ENCODE measurements at regions of chr9 and their contacts with region 1.

Region 1: DNA sequence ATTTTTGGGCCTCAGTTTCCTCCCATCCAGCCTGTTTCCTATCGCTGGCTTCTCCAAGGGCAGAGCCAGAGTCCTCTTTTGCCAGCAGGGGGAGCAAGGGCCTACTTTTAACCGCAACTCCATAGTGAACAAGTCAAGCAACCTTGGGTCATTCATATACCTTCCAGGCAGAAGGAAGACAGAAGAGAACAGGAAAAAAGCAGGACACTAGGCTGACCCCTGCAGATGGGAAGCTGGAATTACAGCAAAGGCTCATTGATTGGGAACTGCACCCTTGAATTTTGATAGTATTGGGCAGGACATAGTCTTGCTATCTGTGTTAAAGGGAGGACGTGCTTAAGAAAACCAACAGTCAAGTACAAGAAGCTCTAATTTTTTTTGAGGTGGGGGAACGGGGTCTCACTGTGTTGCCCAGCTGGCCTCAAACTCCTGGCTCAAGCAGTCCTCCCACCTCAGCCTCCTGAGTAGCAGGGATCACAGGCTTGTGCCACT is 30.1 kb downstream of the QRFP start:
- DNase-seq: peak; percentile 82 to 86
- ATAC-seq: peak; percentile 88

Region 2: GRCh38 chr9:130701056-130702022 is 165.2 kb before region 1 on chr9:
- intact Hi-C with region 1: loop called (anchors 5 to 10 kb)
- DNase-seq: peak; percentile 57 to 87
- ATAC-seq: peak; percentile 94

Region 3: DNA sequence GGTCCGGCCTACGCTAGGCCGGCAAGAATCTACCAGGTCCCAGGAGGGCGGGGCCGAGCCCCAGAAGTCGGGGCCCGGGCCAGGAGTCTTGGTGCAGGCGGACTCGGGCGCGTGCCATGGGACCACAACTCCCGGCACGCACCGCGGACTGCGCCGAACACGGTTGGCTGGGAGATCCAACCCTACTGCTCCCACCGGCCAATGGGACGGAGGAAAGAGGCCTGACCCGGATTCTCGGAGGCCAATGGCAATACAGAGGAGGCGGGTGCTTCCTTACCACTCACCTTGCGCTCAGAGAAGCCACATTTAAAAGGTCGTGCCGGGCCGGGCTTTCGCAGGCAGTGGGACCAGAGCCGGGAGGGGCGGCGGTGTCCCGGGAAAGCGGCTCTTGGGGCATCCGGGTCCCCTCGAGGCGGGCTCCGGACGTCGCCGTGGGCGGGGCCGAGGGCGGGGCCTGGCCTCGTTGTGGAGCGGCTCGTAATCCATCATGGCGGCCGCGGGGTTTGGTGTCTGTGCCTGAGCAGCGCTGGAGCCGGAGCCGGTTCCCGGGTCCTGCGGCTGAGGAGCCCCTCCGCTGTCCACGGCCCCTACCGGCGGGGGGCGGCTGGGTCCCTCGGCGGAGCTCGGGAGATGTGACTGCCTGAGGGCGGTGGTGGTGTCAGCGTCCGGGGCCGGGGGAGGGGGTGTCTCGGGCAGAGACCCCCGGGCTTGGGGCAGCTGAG is 153.8 kb before region 1 on chr9:
- intact Hi-C with region 1: loop called (anchors 5 to 10 kb)
- DNase-seq: peak; percentile 97 to 99
- ATAC-seq: peak; percentile 90

Region 4: GRCh38 chr9:131046581-131047202 is 180.2 kb after region 1 on chr9:
- intact Hi-C with region 1: loop called in 1 of 2 experiments (anchors 10 kb)
- DNase-seq: peak in 1 of 2 donors; percentile 76
- ATAC-seq: peak; percentile 92

Region 5: DNA sequence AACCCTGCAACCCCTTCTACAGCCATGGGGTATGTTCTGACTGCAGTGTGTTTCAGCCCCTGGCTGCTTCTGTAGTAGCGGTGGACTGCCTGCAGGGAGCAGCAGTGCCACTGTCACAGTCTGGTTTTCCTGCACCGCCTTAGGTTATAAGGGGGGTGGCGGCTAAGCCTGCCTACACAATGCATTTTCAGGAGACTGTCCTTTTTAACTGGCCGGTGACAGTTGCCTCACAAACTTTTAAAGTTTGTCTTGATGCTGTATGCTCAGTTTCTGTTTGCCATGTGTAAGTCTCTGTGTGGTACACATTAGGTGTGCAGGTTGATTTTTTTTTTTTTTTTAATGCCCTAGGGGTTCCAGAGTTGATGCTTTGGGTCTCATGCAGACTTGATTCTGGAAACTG is 311.9 kb after region 1 on chr9:
- intact Hi-C with region 1: no loop called
- DNase-seq: peak; percentile 32 to 76
- ATAC-seq: peak; percentile 91